Ascending aorta (tissue), 2 donors: ENCODE measurements at regions of chr9 and their contacts with region 1.

Region 1: GRCh38 chr9:113340017-113340699 is at the start of gene WDR31:
- DNase-seq: peak; percentile 24 to 92
- H3K4me3 ChIP-seq: peak within 1 kb of the TSS; percentile 70 to 76
- H3K27ac ChIP-seq: peak within 1 kb of the TSS; percentile 62 to 72
- H3K4me1 ChIP-seq: peaks cover 0 to 7% of the 10 kb centered on the region in 2 donors
- H3K27me3 ChIP-seq: no peaks in the 10 kb centered on the region
- CTCF ChIP-seq: peak in 1 of 3 experiments; percentile 4
- total RNA-seq, gene WDR31: 0.21 TPM

Region 2: DNA sequence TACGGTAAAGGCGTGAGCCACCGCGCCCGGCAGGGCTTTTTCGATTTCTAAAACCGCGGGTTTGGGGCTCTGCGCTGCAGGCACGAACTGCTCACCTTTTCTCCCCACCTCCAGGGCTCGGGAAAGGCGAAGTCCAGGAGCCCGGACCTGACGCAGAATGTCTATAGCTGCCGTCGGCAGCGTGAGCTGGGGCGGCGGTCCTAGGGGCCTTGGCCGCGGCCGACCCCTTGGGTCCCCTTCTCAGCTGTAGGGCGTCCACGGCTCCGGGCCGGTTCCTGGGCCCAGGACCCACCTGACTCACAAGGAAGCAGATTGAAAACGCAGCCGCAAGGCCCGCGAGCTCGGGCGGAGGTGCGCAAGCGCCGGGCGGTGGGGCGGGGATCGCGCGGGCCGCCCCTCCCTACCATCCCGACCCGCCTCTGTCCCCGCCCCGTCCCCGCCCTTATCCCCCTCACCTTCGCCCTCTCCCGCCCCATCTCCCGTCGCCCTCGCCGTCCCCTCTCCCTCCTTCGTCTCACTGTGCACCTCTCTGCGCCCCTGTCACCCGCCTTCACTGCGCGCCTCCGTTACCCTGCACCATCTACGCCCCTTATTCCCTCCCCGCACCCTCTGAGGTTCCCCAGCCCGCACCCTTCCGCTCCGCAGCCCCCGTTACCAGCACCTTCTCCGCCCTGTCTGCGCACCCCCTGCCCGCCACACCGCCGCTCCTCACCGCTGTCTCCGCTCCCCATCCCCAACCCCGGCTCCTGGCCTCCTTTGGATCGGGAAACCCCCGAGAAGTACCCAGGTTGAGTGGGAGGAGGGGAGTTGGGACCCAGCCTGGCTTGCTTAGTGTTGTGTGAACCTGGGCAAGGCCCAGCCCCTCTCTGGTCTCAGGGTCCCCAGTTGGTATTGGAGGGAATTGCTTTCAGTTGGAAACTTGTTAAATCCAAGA is 36.7 kb after region 1 on chr9 and contains the start of gene HDHD3:
- intact Hi-C with region 1: loop called (anchors 5 kb)
- DNase-seq: peak; percentile 24 to 91
- H3K4me3 ChIP-seq: peak within 1 kb of the TSS; percentile 70 to 88
- H3K27ac ChIP-seq: peak within 1 kb of the TSS; percentile 68 to 75
- H3K4me1 ChIP-seq: peaks cover 6 to 8% of the 10 kb centered on the region in 2 donors
- H3K27me3 ChIP-seq: no peaks in the 10 kb centered on the region
- CTCF ChIP-seq: no peak
- total RNA-seq, gene HDHD3: 16.5 TPM